Heart right ventricle (tissue), 16 donors: ENCODE measurements at regions of chr6 and their contacts with region 1.

Region 1: GRCh38 chr6:152636609-152637295 is 410 bp downstream of the SYNE1 start:
- DNase-seq: peak; percentile 38 to 61
- ATAC-seq: peak; percentile 66 to 91 (median 75)
- H3K4me3 ChIP-seq: peak overlapping the region; percentile 53 to 82 (median 72)
- H3K27ac ChIP-seq: peak overlapping the region; percentile 24 to 86 (median 79)
- H3K4me1 ChIP-seq: peaks cover 0 to 33% (median 13%) of the 10 kb centered on the region in 9 donors
- H3K27me3 ChIP-seq: peaks cover 0 to 23% (median 0%) of the 10 kb centered on the region in 7 donors
- CTCF ChIP-seq: no peak

Region 2: DNA sequence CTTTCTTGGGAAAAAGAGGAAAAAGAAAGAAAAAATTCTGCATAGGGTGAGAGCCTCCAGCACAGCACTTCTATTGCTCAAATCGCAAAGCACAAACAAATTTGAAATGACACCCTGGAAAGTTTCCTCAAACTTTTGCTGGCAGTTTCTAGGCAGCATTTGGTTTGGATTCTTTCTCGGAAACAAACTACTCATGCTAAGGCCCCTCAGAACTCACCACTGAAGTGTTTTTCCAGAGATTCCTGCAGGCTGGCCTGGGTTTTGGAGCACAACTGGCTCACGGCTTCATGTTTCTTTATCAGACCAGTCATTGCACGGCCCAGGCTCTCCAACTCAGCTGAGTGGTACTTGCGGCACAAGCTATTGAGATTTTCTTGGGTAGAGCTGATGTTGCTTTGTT is 237.4 kb before region 1 on chr6:
- intact Hi-C with region 1: loop called in 1 of 10 experiments (anchors 10 kb)
- DNase-seq: no peak
- ATAC-seq: peak in 5 of 8 donors; percentile 42 to 71 (median 61)
- H3K4me3 ChIP-seq: no peak overlapping the region
- H3K27ac ChIP-seq: peak overlapping the region in 4 of 10 donors; percentile 9 to 42 (median 19)
- H3K4me1 ChIP-seq: peaks cover 0 to 9% (median 0%) of the 10 kb centered on the region in 9 donors
- H3K27me3 ChIP-seq: no peaks in the 10 kb centered on the region
- CTCF ChIP-seq: no peak

Region 3: GRCh38 chr6:152595505-152595904 is 41.2 kb before region 1 on chr6:
- intact Hi-C with region 1: loop called in 3 of 10 experiments (anchors 5 kb)
- DNase-seq: no peak
- ATAC-seq: no peak
- H3K4me3 ChIP-seq: no peak overlapping the region
- H3K27ac ChIP-seq: no peak overlapping the region
- H3K4me1 ChIP-seq: peaks cover 0 to 55% (median 19%) of the 10 kb centered on the region in 9 donors
- H3K27me3 ChIP-seq: no peaks in the 10 kb centered on the region
- CTCF ChIP-seq: peak in 8 of 9 donors; percentile 10 to 54 (median 30)

Region 4: DNA sequence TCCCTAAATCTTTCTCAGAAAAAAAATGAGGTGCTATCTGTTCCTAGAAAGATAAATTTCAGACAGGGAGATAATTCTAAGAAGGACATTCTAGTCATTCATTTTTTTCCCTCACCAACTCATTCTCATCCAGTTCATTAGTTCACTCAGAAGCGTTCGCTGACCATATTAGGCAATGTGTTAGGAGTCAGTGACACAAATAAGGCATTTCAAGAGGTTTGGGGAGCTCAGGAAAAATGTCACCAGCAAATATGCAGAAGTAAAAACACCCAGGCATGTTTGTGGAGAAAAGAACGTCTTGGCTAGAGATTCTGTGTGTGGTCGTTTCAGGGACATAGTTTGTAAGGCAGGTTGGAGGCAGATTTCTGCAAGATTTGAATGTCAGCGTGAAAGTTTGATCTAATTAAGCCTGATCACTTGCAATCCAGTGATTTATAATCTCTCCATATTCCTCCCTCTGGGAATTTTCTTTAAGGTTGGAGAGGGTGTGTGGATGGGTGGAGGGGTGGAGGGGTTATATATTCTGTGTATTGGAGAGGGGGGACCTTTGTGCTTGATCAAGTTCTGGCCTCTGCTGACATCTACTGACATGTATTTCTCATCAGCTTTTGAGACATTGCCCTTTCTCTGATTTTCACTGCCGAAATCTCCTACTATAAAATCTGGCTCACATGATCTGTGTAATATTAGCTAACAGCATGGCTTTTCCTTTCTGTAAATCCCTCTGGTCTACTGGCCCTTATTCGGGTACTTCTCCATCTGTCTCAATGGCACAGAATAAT is 64.5 kb after region 1 on chr6:
- intact Hi-C with region 1: loop called in 2 of 10 experiments (anchors 5 kb)
- DNase-seq: no peak
- ATAC-seq: peak in 4 of 8 donors; percentile 25 to 59 (median 43)
- H3K4me3 ChIP-seq: peak overlapping the region in 9 of 10 donors; percentile 7 to 58 (median 47)
- H3K27ac ChIP-seq: peak overlapping the region in 6 of 10 donors; percentile 10 to 83 (median 72)
- H3K4me1 ChIP-seq: peaks cover 0 to 41% (median 0%) of the 10 kb centered on the region in 9 donors
- H3K27me3 ChIP-seq: peaks cover 0 to 17% (median 0%) of the 10 kb centered on the region in 7 donors
- CTCF ChIP-seq: peak in 5 of 9 donors; percentile 8 to 48 (median 24)